CD8-positive, alpha-beta T cell (primary cell): ENCODE measurements at regions of chr10 and their contacts with region 1.

Region 1: GRCh38 chr10:89369156-89370105 is 8.4 kb upstream of the IFIT1B start:
- DNase-seq: peak in 3 of 9 experiments; percentile 9 to 53 (median 41)
- ATAC-seq: peak; percentile 46
- H3K4me3 ChIP-seq: no peak overlapping the region
- H3K4me3 Mint-ChIP-seq: no peak overlapping the region
- H3K27ac ChIP-seq: no peak overlapping the region
- H3K27ac Mint-ChIP-seq: no peak overlapping the region
- H3K4me1 ChIP-seq: no peaks in the 10 kb centered on the region
- H3K4me1 Mint-ChIP-seq: peaks cover 5% of the 10 kb centered on the region
- H3K27me3 ChIP-seq: no peaks in the 10 kb centered on the region
- H3K27me3 Mint-ChIP-seq: peaks cover 10% of the 10 kb centered on the region
- CTCF ChIP-seq: peak; percentile 57

Region 2: GRCh38 chr10:88538038-88538437 is 831.4 kb before region 1 on chr10:
- CTCF ChIA-PET with region 1: no interaction called
- POLR2A ChIA-PET with region 1: no interaction called
- intact Hi-C with region 1: no loop called
- DNase-seq: no peak
- ATAC-seq: no peak
- H3K4me3 ChIP-seq: no peak overlapping the region
- H3K4me3 Mint-ChIP-seq: no peak overlapping the region
- H3K27ac ChIP-seq: no peak overlapping the region
- H3K27ac Mint-ChIP-seq: no peak overlapping the region
- H3K4me1 ChIP-seq: no peaks in the 10 kb centered on the region
- H3K4me1 Mint-ChIP-seq: no peaks in the 10 kb centered on the region
- H3K27me3 ChIP-seq: no peaks in the 10 kb centered on the region
- H3K27me3 Mint-ChIP-seq: no peaks in the 10 kb centered on the region
- CTCF ChIP-seq: no peak

Region 3: DNA sequence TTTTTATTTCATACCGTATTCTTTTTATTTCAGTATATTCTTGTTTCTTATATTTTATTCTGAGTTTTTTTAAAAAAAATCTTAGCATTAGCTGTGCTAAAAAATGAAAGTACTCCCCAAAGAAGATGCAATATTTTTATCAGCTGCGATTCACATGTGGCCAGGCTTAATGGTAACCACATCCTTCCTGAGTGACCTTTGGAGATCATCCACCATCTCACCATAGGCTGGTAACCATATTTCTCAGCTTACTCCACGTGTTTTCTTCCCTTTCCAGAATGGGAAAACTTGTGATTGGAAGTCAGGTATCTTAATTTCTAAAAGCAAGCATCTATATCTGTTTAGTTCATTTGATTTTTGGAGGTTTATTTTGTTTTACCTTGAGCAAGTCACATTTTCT is 585.7 kb before region 1 on chr10:
- CTCF ChIA-PET with region 1: no interaction called
- POLR2A ChIA-PET with region 1: no interaction called
- intact Hi-C with region 1: no loop called
- DNase-seq: no peak
- ATAC-seq: no peak
- H3K4me3 ChIP-seq: no peak overlapping the region
- H3K4me3 Mint-ChIP-seq: no peak overlapping the region
- H3K27ac ChIP-seq: no peak overlapping the region
- H3K27ac Mint-ChIP-seq: no peak overlapping the region
- H3K4me1 ChIP-seq: no peaks in the 10 kb centered on the region
- H3K4me1 Mint-ChIP-seq: peaks cover 2% of the 10 kb centered on the region
- H3K27me3 ChIP-seq: no peaks in the 10 kb centered on the region
- H3K27me3 Mint-ChIP-seq: peaks cover 4% of the 10 kb centered on the region
- CTCF ChIP-seq: no peak

Region 4: GRCh38 chr10:89062861-89063260 is 306.6 kb before region 1 on chr10:
- CTCF ChIA-PET with region 1: no interaction called
- POLR2A ChIA-PET with region 1: no interaction called
- intact Hi-C with region 1: no loop called
- DNase-seq: no peak
- ATAC-seq: no peak
- H3K4me3 ChIP-seq: no peak overlapping the region
- H3K4me3 Mint-ChIP-seq: no peak overlapping the region
- H3K27ac ChIP-seq: no peak overlapping the region
- H3K27ac Mint-ChIP-seq: no peak overlapping the region
- H3K4me1 ChIP-seq: no peaks in the 10 kb centered on the region
- H3K4me1 Mint-ChIP-seq: no peaks in the 10 kb centered on the region
- H3K27me3 ChIP-seq: no peaks in the 10 kb centered on the region
- H3K27me3 Mint-ChIP-seq: no peaks in the 10 kb centered on the region
- CTCF ChIP-seq: no peak

Region 5: GRCh38 chr10:89235073-89235798 is 134.2 kb before region 1 on chr10:
- CTCF ChIA-PET with region 1: no interaction called
- POLR2A ChIA-PET with region 1: no interaction called
- intact Hi-C with region 1: no loop called
- DNase-seq: peak in 1 of 9 experiments; percentile 19
- ATAC-seq: no peak
- H3K4me3 ChIP-seq: no peak overlapping the region
- H3K4me3 Mint-ChIP-seq: no peak overlapping the region
- H3K27ac ChIP-seq: no peak overlapping the region
- H3K27ac Mint-ChIP-seq: no peak overlapping the region
- H3K4me1 ChIP-seq: no peaks in the 10 kb centered on the region
- H3K4me1 Mint-ChIP-seq: no peaks in the 10 kb centered on the region
- H3K27me3 ChIP-seq: no peaks in the 10 kb centered on the region
- H3K27me3 Mint-ChIP-seq: no peaks in the 10 kb centered on the region
- CTCF ChIP-seq: no peak

Region 6: GRCh38 chr10:89295597-89295996 is 73.8 kb before region 1 on chr10:
- CTCF ChIA-PET with region 1: interaction called, 3 read pairs
- POLR2A ChIA-PET with region 1: no interaction called
- intact Hi-C with region 1: loop called (anchors 1 to 5 kb)
- DNase-seq: no peak
- ATAC-seq: no peak
- H3K4me3 ChIP-seq: no peak overlapping the region
- H3K4me3 Mint-ChIP-seq: no peak overlapping the region
- H3K27ac ChIP-seq: no peak overlapping the region
- H3K27ac Mint-ChIP-seq: no peak overlapping the region
- H3K4me1 ChIP-seq: peaks cover under 1% of the 10 kb centered on the region
- H3K4me1 Mint-ChIP-seq: peaks cover 2% of the 10 kb centered on the region
- H3K27me3 ChIP-seq: no peaks in the 10 kb centered on the region
- H3K27me3 Mint-ChIP-seq: peaks cover 2% of the 10 kb centered on the region
- CTCF ChIP-seq: no peak